Caco-2 (cell line): ENCODE measurements at regions of chr3 and their contacts with region 1.

Region 1: DNA sequence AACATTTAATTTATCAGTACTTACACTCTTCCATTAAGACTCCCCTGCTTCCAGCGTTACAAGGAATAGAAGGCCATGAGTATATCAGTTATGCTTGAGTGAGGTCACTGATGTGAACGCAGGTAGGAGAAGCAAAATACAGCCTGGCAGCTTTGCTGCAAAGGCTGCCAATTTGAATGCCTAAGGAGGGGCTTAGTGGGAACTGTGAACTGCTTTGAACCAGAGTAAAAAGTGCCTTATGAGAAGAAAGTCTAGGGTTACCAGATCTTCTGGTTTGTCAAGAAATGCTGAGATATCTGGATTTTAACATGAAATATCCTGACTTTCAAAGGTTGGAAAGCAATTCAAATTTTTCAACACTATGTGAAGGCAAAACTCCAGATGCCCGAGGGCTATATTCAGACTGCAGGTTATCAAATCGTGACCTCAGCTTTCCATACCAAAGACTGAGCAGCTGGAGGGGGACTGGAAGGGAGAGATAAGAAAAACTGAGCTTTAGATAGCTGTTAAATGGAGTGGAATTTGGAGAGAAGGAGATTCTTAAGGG is 446.3 kb upstream of the NECTIN3 start:
- DNase-seq: peak; percentile 82 to 89
- H3K4me3 ChIP-seq: no peak overlapping the region
- H3K4me3 Mint-ChIP-seq: peak overlapping the region; percentile 63
- H3K27ac Mint-ChIP-seq: peak overlapping the region; percentile 92
- H3K4me1 ChIP-seq: peaks cover 66% of the 10 kb centered on the region
- H3K4me1 Mint-ChIP-seq: peaks cover 46% of the 10 kb centered on the region
- H3K27me3 ChIP-seq: no peaks in the 10 kb centered on the region
- H3K27me3 Mint-ChIP-seq: no peaks in the 10 kb centered on the region
- CTCF ChIP-seq: no peak

Region 2: GRCh38 chr3:110743202-110743601 is 117.9 kb after region 1 on chr3:
- CTCF ChIA-PET with region 1: no interaction called
- POLR2A ChIA-PET with region 1: no interaction called
- intact Hi-C with region 1: loop called (anchors 5 kb)
- DNase-seq: peak; percentile 39 to 60
- H3K4me3 ChIP-seq: no peak overlapping the region
- H3K4me3 Mint-ChIP-seq: peak overlapping the region; percentile 24
- H3K27ac Mint-ChIP-seq: no peak overlapping the region
- H3K4me1 ChIP-seq: peaks cover 27% of the 10 kb centered on the region
- H3K4me1 Mint-ChIP-seq: peaks cover 13% of the 10 kb centered on the region
- H3K27me3 ChIP-seq: no peaks in the 10 kb centered on the region
- H3K27me3 Mint-ChIP-seq: no peaks in the 10 kb centered on the region
- CTCF ChIP-seq: no peak